Naive thymus-derived CD4-positive, alpha-beta T cell (primary cell): ENCODE measurements at regions of chr1 and their contacts with region 1.

Region 1: DNA sequence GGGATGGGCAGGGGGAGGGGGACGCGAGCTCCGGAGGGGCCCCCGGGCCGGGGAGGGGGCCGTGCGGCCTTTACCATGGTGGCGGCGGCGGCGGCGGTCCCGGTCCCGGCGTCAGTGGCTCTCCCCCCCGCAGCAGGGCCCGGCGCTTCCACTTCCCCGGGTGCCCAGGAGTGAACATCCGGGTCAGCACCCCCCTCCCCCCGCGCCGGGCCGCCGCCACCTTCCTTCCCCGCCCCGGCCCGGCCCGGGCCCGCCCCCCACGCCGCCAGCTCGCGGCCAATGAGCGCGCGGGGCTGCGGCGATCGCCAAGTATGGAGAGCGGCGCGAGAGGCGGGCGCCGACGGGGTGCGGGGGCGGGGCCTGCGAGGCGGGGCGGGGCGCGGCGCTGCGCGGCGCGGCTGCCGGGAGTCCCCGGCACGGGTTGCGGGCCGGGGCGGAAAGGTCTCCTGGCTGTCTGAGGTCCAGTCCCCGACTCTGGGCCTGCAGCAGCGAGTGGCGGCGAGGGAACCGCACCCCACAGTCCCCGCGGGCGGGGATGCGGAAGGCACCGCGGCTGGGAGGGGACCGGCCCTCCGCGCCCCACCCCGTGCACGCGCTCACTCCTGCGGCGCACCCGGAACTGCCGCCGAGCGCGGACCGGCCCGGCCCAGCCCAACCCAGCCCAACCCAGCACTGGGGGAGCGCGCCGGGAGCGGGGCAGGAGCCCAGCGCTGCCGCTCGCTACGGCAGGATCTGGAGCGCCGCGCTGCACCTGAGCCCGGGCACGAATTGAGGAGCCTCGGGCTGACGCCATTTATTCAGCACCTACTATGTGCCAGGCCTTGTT is at the start of gene CAPZB:
- DNase-seq: peak; percentile 84 to 94 (median 91)
- ATAC-seq: peak; percentile 94
- H3K4me3 ChIP-seq: peak within 1 kb of the TSS; percentile 87
- H3K4me3 Mint-ChIP-seq: peak within 1 kb of the TSS; percentile 92 to 98 (median 94)
- H3K27ac ChIP-seq: peak within 1 kb of the TSS; percentile 97
- H3K27ac Mint-ChIP-seq: peak within 1 kb of the TSS; percentile 88 to 97 (median 96)
- H3K4me1 ChIP-seq: peaks cover 52 to 59% of the 10 kb centered on the region in 2 donors
- H3K4me1 Mint-ChIP-seq: peaks cover 59 to 71% (median 67%) of the 10 kb centered on the region in 7 donors
- H3K27me3 ChIP-seq: no peaks in the 10 kb centered on the region
- H3K27me3 Mint-ChIP-seq: no peaks in the 10 kb centered on the region
- total RNA-seq, gene CAPZB: 216 to 519 (median 264) TPM

Region 2: GRCh38 chr1:19251305-19252196 is 234.0 kb before region 1 on chr1 and contains the starts of genes EMC1 and MRTO4:
- CTCF ChIA-PET with region 1: no interaction called
- POLR2A ChIA-PET with region 1: no interaction called
- intact Hi-C with region 1: loop called in 1 of 2 experiments (anchors 1 kb)
- DNase-seq: peak; percentile 83 to 96 (median 92)
- ATAC-seq: peak; percentile 97
- H3K4me3 ChIP-seq: peak within 1 kb of the TSS; percentile 92
- H3K4me3 Mint-ChIP-seq: peak within 1 kb of the TSS; percentile 91 to 98 (median 96)
- H3K27ac ChIP-seq: peak within 1 kb of the TSS; percentile 91
- H3K27ac Mint-ChIP-seq: peak within 1 kb of the TSS; percentile 91 to 97 (median 95)
- H3K4me1 ChIP-seq: peaks cover 26 to 30% of the 10 kb centered on the region in 2 donors
- H3K4me1 Mint-ChIP-seq: peaks cover 20 to 46% (median 29%) of the 10 kb centered on the region in 7 donors
- H3K27me3 ChIP-seq: no peaks in the 10 kb centered on the region
- H3K27me3 Mint-ChIP-seq: no peaks in the 10 kb centered on the region
- total RNA-seq, gene EMC1: 29.8 to 43.7 (median 37.1) TPM
- total RNA-seq, gene MRTO4: 17.1 to 42.3 (median 22.4) TPM

Region 3: DNA sequence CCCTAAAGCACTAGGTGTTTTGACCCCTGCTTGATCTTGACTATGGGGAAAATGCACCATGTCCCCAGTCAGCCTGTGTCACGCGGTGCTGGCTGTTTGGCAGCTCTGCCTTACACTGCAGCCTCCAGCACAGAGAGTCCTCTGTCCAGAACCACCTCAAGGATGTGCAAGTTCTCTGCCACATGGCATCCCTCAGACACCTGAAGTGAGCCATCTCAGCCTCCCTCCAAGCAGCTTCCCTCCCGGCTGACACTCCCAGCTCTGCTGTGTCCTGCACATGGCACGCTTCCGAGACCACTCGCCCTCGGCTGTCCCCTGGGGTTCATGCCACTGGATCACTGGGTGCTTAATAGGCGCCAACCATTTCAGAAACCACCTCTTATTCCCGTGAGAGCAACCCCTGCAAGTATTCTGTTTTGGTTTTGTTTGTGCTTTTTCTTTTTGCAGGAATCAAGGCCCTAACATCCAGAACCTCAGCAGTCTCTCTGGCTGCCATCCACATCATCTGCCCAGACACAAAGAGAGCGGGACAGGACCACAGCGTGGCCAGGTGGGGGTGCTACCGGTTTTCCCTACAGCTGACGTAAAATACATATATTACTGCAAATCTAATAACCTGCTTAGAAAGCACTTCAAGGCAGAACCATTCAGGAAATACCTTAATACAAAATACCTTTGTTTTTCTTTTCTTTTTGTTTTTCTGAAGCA is 46.0 kb before region 1 on chr1:
- CTCF ChIA-PET with region 1: interaction called, 10 read pairs
- POLR2A ChIA-PET with region 1: interaction called, 7 read pairs
- intact Hi-C with region 1: loop called in 1 of 2 experiments (anchors 1 kb)
- DNase-seq: peak in 8 of 9 donors; percentile 22 to 64 (median 55)
- ATAC-seq: peak; percentile 60
- H3K4me3 ChIP-seq: no peak overlapping the region
- H3K4me3 Mint-ChIP-seq: peak overlapping the region; percentile 23 to 68 (median 46)
- H3K27ac ChIP-seq: peak overlapping the region; percentile 36
- H3K27ac Mint-ChIP-seq: peak overlapping the region; percentile 63 to 90 (median 75)
- H3K4me1 ChIP-seq: peaks cover 30 to 66% of the 10 kb centered on the region in 2 donors
- H3K4me1 Mint-ChIP-seq: peaks cover 64 to 98% (median 89%) of the 10 kb centered on the region in 7 donors
- H3K27me3 ChIP-seq: no peaks in the 10 kb centered on the region
- H3K27me3 Mint-ChIP-seq: no peaks in the 10 kb centered on the region

Region 4: DNA sequence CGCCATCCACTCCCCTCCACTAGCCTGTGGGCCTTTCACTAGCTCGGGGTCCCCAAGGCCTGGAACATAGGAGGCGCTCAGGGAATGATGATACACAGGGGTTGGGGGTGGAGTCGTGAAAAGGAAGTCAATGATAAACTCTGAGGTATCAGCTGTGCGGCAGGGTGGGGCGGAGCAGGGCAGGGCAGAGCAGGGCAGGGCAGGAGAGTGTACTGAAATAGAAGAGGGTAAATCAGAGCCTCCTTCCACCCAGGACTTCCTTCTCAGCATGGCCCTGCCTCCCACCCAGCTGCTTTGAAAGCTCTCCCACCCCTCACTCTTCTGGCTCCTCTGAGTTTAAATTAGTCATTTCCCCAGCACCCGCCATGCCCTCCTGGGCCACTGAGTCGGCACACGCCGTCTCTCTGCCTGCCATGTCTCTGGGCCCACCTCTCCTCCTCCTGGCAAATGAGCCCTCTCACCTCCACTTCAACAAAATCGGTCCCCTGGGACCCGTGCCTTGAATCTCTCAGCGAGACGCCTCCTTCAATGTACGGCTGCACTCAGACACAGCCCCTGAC is 17.1 kb before region 1 on chr1:
- CTCF ChIA-PET with region 1: interaction called, 11 read pairs
- POLR2A ChIA-PET with region 1: interaction called, 492 read pairs
- intact Hi-C with region 1: loop called (anchors 1 kb)
- DNase-seq: peak in 8 of 9 donors; percentile 54 to 79 (median 70)
- ATAC-seq: peak; percentile 92
- H3K4me3 ChIP-seq: peak overlapping the region; percentile 32
- H3K4me3 Mint-ChIP-seq: peak overlapping the region; percentile 67 to 84 (median 80)
- H3K27ac ChIP-seq: peak overlapping the region; percentile 73
- H3K27ac Mint-ChIP-seq: peak overlapping the region; percentile 87 to 97 (median 94)
- H3K4me1 ChIP-seq: peaks cover 81 to 92% of the 10 kb centered on the region in 2 donors
- H3K4me1 Mint-ChIP-seq: peaks cover 56 to 99% (median 94%) of the 10 kb centered on the region in 7 donors
- H3K27me3 ChIP-seq: no peaks in the 10 kb centered on the region
- H3K27me3 Mint-ChIP-seq: no peaks in the 10 kb centered on the region

Region 5: GRCh38 chr1:19643602-19644394 is 158.2 kb after region 1 on chr1 and contains the start of gene NBL1:
- CTCF ChIA-PET with region 1: interaction called, 6 read pairs
- POLR2A ChIA-PET with region 1: interaction called, 3 read pairs
- intact Hi-C with region 1: loop called (anchors 2 kb)
- DNase-seq: peak; percentile 60 to 86 (median 71)
- ATAC-seq: peak; percentile 93
- H3K4me3 ChIP-seq: peak within 1 kb of the TSS; percentile 62
- H3K4me3 Mint-ChIP-seq: peak within 1 kb of the TSS; percentile 87 to 100 (median 97)
- H3K27ac ChIP-seq: peak within 1 kb of the TSS; percentile 69
- H3K27ac Mint-ChIP-seq: peak within 1 kb of the TSS; percentile 80 to 98 (median 92)
- H3K4me1 ChIP-seq: peaks cover 6 to 7% of the 10 kb centered on the region in 2 donors
- H3K4me1 Mint-ChIP-seq: peaks cover 17 to 38% (median 33%) of the 10 kb centered on the region in 7 donors
- H3K27me3 ChIP-seq: no peaks in the 10 kb centered on the region
- H3K27me3 Mint-ChIP-seq: peaks cover 0 to 29% (median 8%) of the 10 kb centered on the region in 5 donors
- total RNA-seq, gene NBL1: 20.7 to 36.1 (median 22.8) TPM

Region 6: GRCh38 chr1:20603527-20604464 is 1118.2 kb after region 1 on chr1:
- CTCF ChIA-PET with region 1: no interaction called
- POLR2A ChIA-PET with region 1: no interaction called
- intact Hi-C with region 1: no loop called
- DNase-seq: no peak
- ATAC-seq: peak; percentile 66
- H3K4me3 ChIP-seq: no peak overlapping the region
- H3K4me3 Mint-ChIP-seq: no peak overlapping the region
- H3K27ac ChIP-seq: no peak overlapping the region
- H3K27ac Mint-ChIP-seq: no peak overlapping the region
- H3K4me1 ChIP-seq: no peaks in the 10 kb centered on the region
- H3K4me1 Mint-ChIP-seq: peaks cover 0 to 2% (median 0%) of the 10 kb centered on the region in 7 donors
- H3K27me3 ChIP-seq: no peaks in the 10 kb centered on the region
- H3K27me3 Mint-ChIP-seq: peaks cover 0 to 16% (median 7%) of the 10 kb centered on the region in 5 donors

Region 7: DNA sequence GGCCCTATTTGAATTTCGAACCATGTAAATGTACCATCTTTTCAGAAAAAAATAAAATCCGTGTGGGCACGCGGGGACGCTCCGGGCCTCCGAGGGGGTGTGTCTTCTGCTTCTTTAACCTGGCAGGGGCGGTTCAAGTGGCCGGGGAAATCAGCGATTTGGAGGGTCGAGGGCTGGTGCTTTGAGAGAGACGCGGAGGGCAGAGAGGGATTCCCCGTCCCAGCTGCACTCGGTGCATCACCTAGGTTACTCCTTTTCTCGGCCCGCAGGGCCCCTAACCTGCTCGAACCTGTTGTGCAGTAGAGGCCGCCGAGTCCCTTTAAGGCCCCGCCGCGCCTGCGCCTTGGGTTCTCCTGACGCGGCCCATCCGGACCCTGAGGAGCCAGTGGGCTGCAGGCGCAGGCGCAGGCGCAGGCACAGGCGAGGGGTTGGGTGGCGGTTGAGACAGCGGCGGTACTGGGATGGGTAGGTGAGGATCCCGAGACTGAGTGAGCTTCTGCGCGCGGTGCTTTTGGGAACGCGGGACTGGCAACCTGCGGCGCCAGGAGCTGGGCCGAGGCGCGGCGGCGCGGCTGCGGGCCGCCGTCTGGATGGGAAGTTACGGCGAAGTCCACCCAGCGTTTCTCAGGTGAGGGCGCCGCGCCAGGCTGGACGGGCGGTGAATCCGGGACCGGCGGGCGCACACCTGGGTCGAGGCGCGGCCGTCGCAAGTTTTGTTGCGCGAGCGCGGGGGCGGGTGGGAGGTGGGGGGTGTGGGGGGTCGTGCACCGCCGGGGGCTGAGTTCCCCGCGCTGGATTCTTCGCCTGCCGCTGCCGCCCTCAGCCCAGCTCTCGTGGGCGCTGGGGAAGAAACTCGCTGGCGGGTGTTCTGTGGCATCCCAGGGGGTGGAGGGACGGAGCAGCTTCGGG is 1954.4 kb after region 1 on chr1 and contains the start of gene NBPF3:
- CTCF ChIA-PET with region 1: no interaction called
- POLR2A ChIA-PET with region 1: no interaction called
- intact Hi-C with region 1: no loop called
- DNase-seq: peak; percentile 71 to 86 (median 83)
- ATAC-seq: peak; percentile 99
- H3K4me3 ChIP-seq: peak within 1 kb of the TSS; percentile 80
- H3K4me3 Mint-ChIP-seq: peak within 1 kb of the TSS; percentile 89 to 98 (median 94)
- H3K27ac ChIP-seq: peak within 1 kb of the TSS; percentile 74
- H3K27ac Mint-ChIP-seq: peak within 1 kb of the TSS; percentile 73 to 96 (median 92)
- H3K4me1 ChIP-seq: no peaks in the 10 kb centered on the region
- H3K4me1 Mint-ChIP-seq: peaks cover 20 to 35% (median 24%) of the 10 kb centered on the region in 7 donors
- H3K27me3 ChIP-seq: no peaks in the 10 kb centered on the region
- H3K27me3 Mint-ChIP-seq: peaks cover 0 to 42% (median 2%) of the 10 kb centered on the region in 5 donors
- total RNA-seq, gene NBPF3: 5.6 to 18.1 (median 12.0) TPM